ENCODE measurements at regions of chr9 and their contacts with region 1.

Region 1: DNA sequence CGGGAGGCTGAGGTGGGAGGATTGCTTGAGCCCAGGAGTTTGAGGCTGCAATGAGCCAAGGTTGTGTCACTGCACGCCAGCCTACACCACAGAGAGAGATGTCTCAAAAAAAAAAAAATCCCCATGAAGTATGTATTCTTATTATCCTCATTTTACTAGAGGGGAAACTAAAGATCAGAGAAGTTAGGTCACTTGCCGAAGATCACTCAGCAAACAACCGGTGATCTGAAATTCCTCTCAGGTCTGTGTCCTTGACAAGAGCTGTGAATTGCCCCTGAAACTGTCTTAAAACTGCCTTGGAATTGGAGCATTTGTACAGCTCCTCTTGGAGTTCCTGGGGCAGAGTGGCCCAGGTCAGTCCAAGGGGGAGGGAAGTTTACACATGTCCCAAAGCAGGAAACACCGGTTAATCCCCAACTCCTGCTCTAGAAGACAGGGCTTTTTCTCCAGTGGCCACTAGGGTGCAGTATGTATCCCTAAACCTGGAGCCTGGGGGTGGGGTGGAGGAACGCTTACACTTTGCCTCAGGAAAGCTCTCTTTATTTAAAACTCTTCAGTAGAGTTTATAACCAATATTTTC is 27.6 kb downstream of the AQP7 start:
- DNase-seq: peak; percentile 79
- H3K4me3 Mint-ChIP-seq: no peak overlapping the region
- H3K27ac Mint-ChIP-seq: no peak overlapping the region
- H3K4me1 Mint-ChIP-seq: peaks cover 10% of the 10 kb centered on the region
- H3K27me3 Mint-ChIP-seq: no peaks in the 10 kb centered on the region
- CTCF ChIP-seq: peak; percentile 83

Region 2: GRCh38 chr9:32550562-32551433 is 823.9 kb before region 1 on chr9:
- CTCF ChIA-PET with region 1: no interaction called
- POLR2A ChIA-PET with region 1: no interaction called
- intact Hi-C with region 1: no loop called
- DNase-seq: peak; percentile 86
- H3K4me3 Mint-ChIP-seq: peak overlapping the region; percentile 98
- H3K27ac Mint-ChIP-seq: peak overlapping the region; percentile 94
- H3K4me1 Mint-ChIP-seq: peaks cover 13% of the 10 kb centered on the region
- H3K27me3 Mint-ChIP-seq: no peaks in the 10 kb centered on the region
- CTCF ChIP-seq: no peak

Region 3: GRCh38 chr9:33320568-33321261 is 54.0 kb before region 1 on chr9:
- CTCF ChIA-PET with region 1: interaction called, 10 read pairs
- POLR2A ChIA-PET with region 1: no interaction called
- intact Hi-C with region 1: no loop called
- DNase-seq: peak; percentile 92
- H3K4me3 Mint-ChIP-seq: peak overlapping the region; percentile 20
- H3K27ac Mint-ChIP-seq: peak overlapping the region; percentile 70
- H3K4me1 Mint-ChIP-seq: peaks cover 18% of the 10 kb centered on the region
- H3K27me3 Mint-ChIP-seq: no peaks in the 10 kb centered on the region
- CTCF ChIP-seq: no peak

Region 4: DNA sequence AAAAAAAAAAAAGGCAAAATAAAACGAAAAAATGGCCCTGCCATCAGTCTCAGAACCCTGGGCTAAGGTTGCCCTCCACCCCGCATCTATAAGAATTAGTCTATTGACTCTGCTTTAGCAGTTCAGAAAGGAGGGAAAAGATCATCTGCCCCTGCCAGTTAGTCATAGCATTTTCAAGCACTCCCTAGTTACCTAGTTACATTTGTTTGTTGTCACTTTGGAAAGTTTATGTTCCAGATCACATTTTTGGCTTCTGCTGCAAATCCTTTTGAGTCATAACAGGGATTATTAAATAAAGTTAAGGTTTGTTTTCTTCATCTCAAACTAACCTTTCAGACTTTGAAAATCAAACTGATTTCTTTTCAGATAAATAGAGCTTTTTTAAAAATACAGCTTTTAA is 24.4 kb before region 1 on chr9:
- CTCF ChIA-PET with region 1: interaction called, 15 read pairs
- POLR2A ChIA-PET with region 1: interaction called, 3 read pairs
- intact Hi-C with region 1: no loop called
- DNase-seq: peak; percentile 32
- H3K4me3 Mint-ChIP-seq: no peak overlapping the region
- H3K27ac Mint-ChIP-seq: peak overlapping the region; percentile 54
- H3K4me1 Mint-ChIP-seq: no peaks in the 10 kb centered on the region
- H3K27me3 Mint-ChIP-seq: no peaks in the 10 kb centered on the region
- CTCF ChIP-seq: no peak

Region 5: GRCh38 chr9:33446946-33447798 is 72.4 kb after region 1 on chr9 and contains the start of gene AQP3:
- CTCF ChIA-PET with region 1: interaction called, 14 read pairs
- POLR2A ChIA-PET with region 1: interaction called, 6 read pairs
- intact Hi-C with region 1: no loop called
- DNase-seq: peak; percentile 64
- H3K4me3 Mint-ChIP-seq: peak within 1 kb of the TSS; percentile 67
- H3K27ac Mint-ChIP-seq: peak within 1 kb of the TSS; percentile 47
- H3K4me1 Mint-ChIP-seq: peaks cover 42% of the 10 kb centered on the region
- H3K27me3 Mint-ChIP-seq: no peaks in the 10 kb centered on the region
- CTCF ChIP-seq: no peak
- total RNA-seq, gene AQP3: 0.83 and 0.89 TPM in 2 replicates

Region 6: GRCh38 chr9:33466565-33467495 is 92.1 kb after region 1 on chr9:
- CTCF ChIA-PET with region 1: interaction called, 63 read pairs
- POLR2A ChIA-PET with region 1: interaction called, 3 read pairs
- intact Hi-C with region 1: no loop called
- DNase-seq: peak; percentile 54
- H3K4me3 Mint-ChIP-seq: no peak overlapping the region
- H3K27ac Mint-ChIP-seq: no peak overlapping the region
- H3K4me1 Mint-ChIP-seq: peaks cover 6% of the 10 kb centered on the region
- H3K27me3 Mint-ChIP-seq: no peaks in the 10 kb centered on the region
- CTCF ChIP-seq: peak; percentile 97

Region 7: GRCh38 chr9:33623658-33624586 is 249.2 kb after region 1 on chr9:
- CTCF ChIA-PET with region 1: interaction called, 14 read pairs
- POLR2A ChIA-PET with region 1: interaction called, 4 read pairs
- intact Hi-C with region 1: no loop called
- DNase-seq: peak; percentile 85
- H3K4me3 Mint-ChIP-seq: no peak overlapping the region
- H3K27ac Mint-ChIP-seq: no peak overlapping the region
- H3K4me1 Mint-ChIP-seq: peaks cover 31% of the 10 kb centered on the region
- H3K27me3 Mint-ChIP-seq: no peaks in the 10 kb centered on the region
- CTCF ChIP-seq: peak; percentile 78

Region 8: GRCh38 chr9:33908121-33908520 is 533.4 kb after region 1 on chr9:
- CTCF ChIA-PET with region 1: no interaction called
- POLR2A ChIA-PET with region 1: no interaction called
- intact Hi-C with region 1: no loop called
- DNase-seq: no peak
- H3K4me3 Mint-ChIP-seq: no peak overlapping the region
- H3K27ac Mint-ChIP-seq: no peak overlapping the region
- H3K4me1 Mint-ChIP-seq: peaks cover 6% of the 10 kb centered on the region
- H3K27me3 Mint-ChIP-seq: no peaks in the 10 kb centered on the region
- CTCF ChIP-seq: no peak

Measured in MCF 10A (cell line).